ENCODE measurements at regions of chr13 and their contacts with region 1.

Region 1: GRCh38 chr13:43878892-43879754 is at the start of gene CCDC122:
- DNase-seq: peak; percentile 78
- H3K4me3 ChIP-seq: peak within 1 kb of the TSS; percentile 80
- H3K27ac ChIP-seq: peak within 1 kb of the TSS; percentile 96 to 97
- H3K4me1 ChIP-seq: peaks cover 6% of the 10 kb centered on the region
- H3K27me3 ChIP-seq: no peaks in the 10 kb centered on the region
- CTCF ChIP-seq: no peak
- POLR2A ChIP-seq: peak; percentile 68
- total RNA-seq, gene CCDC122: 13.8 to 14.1 TPM

Region 2: GRCh38 chr13:42594970-42595571 is 1284.1 kb before region 1 on chr13:
- intact Hi-C with region 1: loop called (anchors 5 kb)
- DNase-seq: peak; percentile 46
- H3K4me3 ChIP-seq: no peak overlapping the region
- H3K27ac ChIP-seq: no peak overlapping the region
- H3K4me1 ChIP-seq: no peaks in the 10 kb centered on the region
- H3K27me3 ChIP-seq: no peaks in the 10 kb centered on the region
- CTCF ChIP-seq: peak; percentile 62 to 78 (median 66)
- POLR2A ChIP-seq: no peak

Region 3: GRCh38 chr13:42969558-42970172 is 909.5 kb before region 1 on chr13:
- intact Hi-C with region 1: loop called (anchors 5 kb)
- DNase-seq: peak; percentile 30
- H3K4me3 ChIP-seq: no peak overlapping the region
- H3K27ac ChIP-seq: peak overlapping the region; percentile 30 to 70
- H3K4me1 ChIP-seq: peaks cover 6% of the 10 kb centered on the region
- H3K27me3 ChIP-seq: no peaks in the 10 kb centered on the region
- CTCF ChIP-seq: peak; percentile 37 to 64 (median 52)
- POLR2A ChIP-seq: no peak

Region 4: DNA sequence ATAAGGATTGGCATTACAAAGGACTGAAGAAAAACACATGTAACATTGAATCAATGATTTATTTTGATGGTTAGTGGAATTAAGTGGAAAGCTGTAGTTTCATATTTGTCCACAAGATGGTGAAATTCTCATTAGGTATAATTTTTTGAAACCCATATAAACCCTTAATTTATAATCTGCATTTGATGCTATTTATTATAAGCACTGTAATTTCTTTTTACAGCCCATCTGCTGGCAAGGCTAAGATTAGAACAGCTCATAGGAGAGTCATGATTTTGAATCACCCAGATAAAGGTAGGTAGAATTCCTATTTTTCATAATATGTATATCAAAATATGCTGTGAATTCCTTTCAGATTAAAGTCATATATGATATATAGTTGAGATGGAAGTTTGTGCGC is 793.6 kb before region 1 on chr13:
- intact Hi-C with region 1: loop called (anchors 10 kb)
- DNase-seq: no peak
- H3K4me3 ChIP-seq: no peak overlapping the region
- H3K27ac ChIP-seq: no peak overlapping the region
- H3K4me1 ChIP-seq: no peaks in the 10 kb centered on the region
- H3K27me3 ChIP-seq: no peaks in the 10 kb centered on the region
- CTCF ChIP-seq: peak; percentile 61 to 77 (median 71)
- POLR2A ChIP-seq: no peak

Region 5: GRCh38 chr13:43698758-43699157 is 180.4 kb before region 1 on chr13:
- intact Hi-C with region 1: no loop called
- DNase-seq: no peak
- H3K4me3 ChIP-seq: no peak overlapping the region
- H3K27ac ChIP-seq: no peak overlapping the region
- H3K4me1 ChIP-seq: no peaks in the 10 kb centered on the region
- H3K27me3 ChIP-seq: no peaks in the 10 kb centered on the region
- CTCF ChIP-seq: no peak
- POLR2A ChIP-seq: no peak

Region 6: DNA sequence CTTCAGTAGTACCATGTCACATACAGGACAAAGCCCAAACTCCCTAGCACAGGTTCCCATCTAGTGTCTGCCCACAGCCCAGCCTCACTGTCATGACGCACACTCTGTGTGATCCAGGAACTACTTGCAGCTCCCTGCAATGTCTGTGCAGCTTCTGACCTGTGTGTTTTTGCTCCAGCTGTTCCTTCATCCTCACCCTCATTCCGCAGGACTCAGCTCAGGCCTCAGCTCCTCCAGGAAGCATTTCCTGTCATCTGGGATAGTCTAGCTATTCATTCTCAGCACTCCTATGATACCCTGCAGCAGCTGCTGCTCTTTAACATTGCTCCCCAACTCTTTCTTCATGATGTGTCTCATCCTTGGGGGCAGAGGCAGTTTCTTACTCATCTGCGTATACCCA is 148.5 kb before region 1 on chr13:
- intact Hi-C with region 1: no loop called
- DNase-seq: no peak
- H3K4me3 ChIP-seq: no peak overlapping the region
- H3K27ac ChIP-seq: no peak overlapping the region
- H3K4me1 ChIP-seq: no peaks in the 10 kb centered on the region
- H3K27me3 ChIP-seq: no peaks in the 10 kb centered on the region
- CTCF ChIP-seq: no peak
- POLR2A ChIP-seq: no peak